PC-3 (cell line): ENCODE measurements at regions of chr1 and their contacts with region 1.

Region 1: GRCh38 chr1:67766141-67766978 is 66.9 kb downstream of the GNG12 start:
- DNase-seq: peak; percentile 62
- ATAC-seq: peak; percentile 59
- H3K4me3 ChIP-seq: peak overlapping the region; percentile 54
- H3K27ac ChIP-seq: peak overlapping the region; percentile 33
- H3K4me1 ChIP-seq: peaks cover 34% of the 10 kb centered on the region
- H3K27me3 ChIP-seq: no peaks in the 10 kb centered on the region
- CTCF ChIP-seq: peak; percentile 92

Region 2: GRCh38 chr1:67555461-67556296 is 210.7 kb before region 1 on chr1:
- CTCF ChIA-PET with region 1: no interaction called
- POLR2A ChIA-PET with region 1: interaction called, 11 read pairs
- intact Hi-C with region 1: no loop called
- DNase-seq: no peak
- ATAC-seq: no peak; the same call in 1 of the 2 replicates
- H3K4me3 ChIP-seq: no peak overlapping the region
- H3K27ac ChIP-seq: peak overlapping the region; percentile 86
- H3K4me1 ChIP-seq: peaks cover 42% of the 10 kb centered on the region
- H3K27me3 ChIP-seq: no peaks in the 10 kb centered on the region
- CTCF ChIP-seq: no peak

Region 3: GRCh38 chr1:67749844-67750689 is 16.3 kb before region 1 on chr1:
- CTCF ChIA-PET with region 1: no interaction called
- POLR2A ChIA-PET with region 1: interaction called, 21 read pairs
- intact Hi-C with region 1: no loop called
- DNase-seq: peak; percentile 91
- ATAC-seq: peak; percentile 91
- H3K4me3 ChIP-seq: peak overlapping the region; percentile 53
- H3K27ac ChIP-seq: peak overlapping the region; percentile 96
- H3K4me1 ChIP-seq: peaks cover 72% of the 10 kb centered on the region
- H3K27me3 ChIP-seq: no peaks in the 10 kb centered on the region
- CTCF ChIP-seq: no peak

Region 4: GRCh38 chr1:67838180-67838910 is 72.0 kb after region 1 on chr1:
- CTCF ChIA-PET with region 1: no interaction called
- POLR2A ChIA-PET with region 1: no interaction called
- intact Hi-C with region 1: no loop called
- DNase-seq: no peak
- ATAC-seq: no peak
- H3K4me3 ChIP-seq: no peak overlapping the region
- H3K27ac ChIP-seq: no peak overlapping the region
- H3K4me1 ChIP-seq: peaks cover 34% of the 10 kb centered on the region
- H3K27me3 ChIP-seq: no peaks in the 10 kb centered on the region
- CTCF ChIP-seq: no peak

Region 5: GRCh38 chr1:68010090-68010489 is 243.7 kb after region 1 on chr1:
- CTCF ChIA-PET with region 1: interaction called, 3 read pairs
- POLR2A ChIA-PET with region 1: no interaction called
- intact Hi-C with region 1: loop called (anchors 1 kb)
- DNase-seq: peak; percentile 53
- ATAC-seq: peak; percentile 82
- H3K4me3 ChIP-seq: no peak overlapping the region
- H3K27ac ChIP-seq: no peak overlapping the region
- H3K4me1 ChIP-seq: no peaks in the 10 kb centered on the region
- H3K27me3 ChIP-seq: no peaks in the 10 kb centered on the region
- CTCF ChIP-seq: peak; percentile 73

Region 6: DNA sequence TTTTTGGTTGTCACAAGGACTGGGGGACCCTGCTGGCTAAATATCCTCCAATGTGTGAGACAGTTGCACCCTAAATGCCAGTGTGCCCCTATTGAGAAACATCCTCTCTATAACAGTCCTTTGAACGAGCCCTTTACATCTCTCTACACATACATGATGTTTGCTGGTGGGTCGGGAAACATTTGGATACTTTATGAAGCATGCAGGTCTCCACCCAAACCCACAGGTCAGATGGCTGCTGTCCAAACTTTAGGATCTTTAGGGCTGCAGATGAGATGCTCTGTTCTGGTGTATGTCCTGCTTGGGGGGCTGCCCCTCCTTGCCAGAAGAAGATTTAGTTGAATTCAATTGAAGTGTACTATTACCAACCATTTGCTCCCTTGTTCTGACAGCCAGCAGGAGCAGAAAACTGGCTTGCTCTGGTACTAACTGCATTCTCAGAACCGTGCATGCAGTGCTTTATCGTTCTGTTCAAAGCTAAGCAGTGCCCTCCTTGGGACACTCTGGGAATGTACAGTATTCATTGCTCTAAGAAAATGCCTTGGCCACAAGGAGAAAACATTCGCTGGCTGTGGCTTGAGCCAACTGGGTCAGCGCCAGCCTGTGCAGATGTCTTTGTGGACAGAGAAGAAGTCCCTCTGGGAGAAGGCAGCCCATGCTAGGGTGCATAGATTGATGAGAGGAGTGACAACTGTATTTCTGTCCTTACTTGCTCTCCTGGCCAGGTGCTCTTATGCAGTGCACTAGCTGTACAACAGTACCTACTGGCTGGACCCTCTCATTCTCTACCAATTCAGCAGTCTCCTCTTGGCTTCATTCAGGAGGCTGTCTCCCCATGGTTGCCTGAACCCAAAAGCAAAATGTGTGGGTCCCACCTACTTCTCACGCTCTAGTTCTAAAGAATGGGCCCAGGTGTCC is 345.4 kb after region 1 on chr1:
- CTCF ChIA-PET with region 1: no interaction called
- POLR2A ChIA-PET with region 1: no interaction called
- intact Hi-C with region 1: loop called (anchors 1 kb)
- DNase-seq: peak; percentile 79
- ATAC-seq: peak; percentile 72
- H3K4me3 ChIP-seq: no peak overlapping the region
- H3K27ac ChIP-seq: no peak overlapping the region
- H3K4me1 ChIP-seq: peaks cover 29% of the 10 kb centered on the region
- H3K27me3 ChIP-seq: no peaks in the 10 kb centered on the region
- CTCF ChIP-seq: peak; percentile 88

Region 7: GRCh38 chr1:68782890-68783289 is 1016.5 kb after region 1 on chr1:
- CTCF ChIA-PET with region 1: no interaction called
- POLR2A ChIA-PET with region 1: no interaction called
- intact Hi-C with region 1: no loop called
- DNase-seq: peak; percentile 5
- ATAC-seq: no peak
- H3K4me3 ChIP-seq: no peak overlapping the region
- H3K27ac ChIP-seq: no peak overlapping the region
- H3K4me1 ChIP-seq: no peaks in the 10 kb centered on the region
- H3K27me3 ChIP-seq: no peaks in the 10 kb centered on the region; the same call in 1 of the 2 replicates
- CTCF ChIP-seq: no peak; the same call in 1 of the 2 replicates